PC-3 (cell line): ENCODE measurements at regions of chr6 and their contacts with region 1.

Region 1: GRCh38 chr6:56595490-56596122 is 47.1 kb downstream of the DST start:
- DNase-seq: peak; percentile 37
- ATAC-seq: peak; percentile 73
- H3K4me3 ChIP-seq: no peak overlapping the region
- H3K27ac ChIP-seq: no peak overlapping the region
- H3K4me1 ChIP-seq: no peaks in the 10 kb centered on the region
- H3K27me3 ChIP-seq: no peaks in the 10 kb centered on the region
- CTCF ChIP-seq: peak; percentile 80

Region 2: GRCh38 chr6:56555438-56555872 is 40.2 kb before region 1 on chr6:
- CTCF ChIA-PET with region 1: no interaction called
- POLR2A ChIA-PET with region 1: no interaction called
- intact Hi-C with region 1: loop called (anchors 5 kb)
- DNase-seq: no peak
- ATAC-seq: no peak
- H3K4me3 ChIP-seq: no peak overlapping the region
- H3K27ac ChIP-seq: no peak overlapping the region
- H3K4me1 ChIP-seq: peaks cover 16% of the 10 kb centered on the region
- H3K27me3 ChIP-seq: no peaks in the 10 kb centered on the region
- CTCF ChIP-seq: no peak